Activated CD4-positive, alpha-beta T cell treated with anti-CD3 and anti-CD28 coated beads for 36 hours (primary cell): ENCODE measurements at regions of chr19 and their contacts with region 1.

Region 1: GRCh38 chr19:46661020-46661731 is at the start of gene DACT3:
- DNase-seq: peak; percentile 100
- ATAC-seq: peak; percentile 87
- H3K4me3 Mint-ChIP-seq: peak within 1 kb of the TSS; percentile 66
- H3K27ac Mint-ChIP-seq: peak within 1 kb of the TSS; percentile 62
- H3K4me1 Mint-ChIP-seq: peaks cover 28% of the 10 kb centered on the region
- H3K27me3 Mint-ChIP-seq: peaks cover 12% of the 10 kb centered on the region
- total RNA-seq, gene DACT3: 2.9 to 3.1 TPM

Region 2: DNA sequence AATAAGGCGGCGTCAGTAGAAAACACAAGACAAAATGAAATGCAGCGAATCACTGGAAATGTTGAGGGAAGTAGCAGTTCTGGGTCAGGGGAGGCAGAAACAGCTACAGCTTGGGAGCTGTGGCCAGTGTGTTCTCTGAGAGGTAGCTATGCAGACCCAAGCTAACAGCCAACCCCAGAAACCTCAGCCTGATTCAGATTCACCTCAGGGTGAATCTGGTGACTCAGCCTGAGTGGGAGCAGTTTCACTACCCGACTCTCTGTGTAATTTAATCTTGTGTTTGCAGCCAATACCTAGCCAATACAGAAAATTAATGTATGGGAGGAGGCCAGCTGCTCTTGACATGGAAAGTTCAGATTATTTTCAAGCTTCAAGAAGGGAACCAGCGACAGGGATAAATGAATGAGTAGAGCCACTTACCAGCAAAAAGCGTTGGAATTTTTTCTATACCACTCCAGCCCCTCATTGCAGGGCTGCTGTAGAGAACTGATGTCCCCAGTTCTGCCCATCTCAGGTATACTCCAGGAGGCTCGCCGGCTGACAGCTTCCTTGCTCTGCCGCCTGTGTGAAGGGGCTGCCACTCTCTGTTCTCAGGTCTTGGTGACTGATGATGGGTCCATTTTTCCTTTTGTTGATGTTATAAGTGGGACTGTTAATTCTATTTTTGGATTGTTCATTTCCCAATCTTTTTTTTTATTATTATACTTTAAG is 545.6 kb before region 1 on chr19:
- CTCF ChIA-PET with region 1: no interaction called
- POLR2A ChIA-PET with region 1: no interaction called
- intact Hi-C with region 1: no loop called
- DNase-seq: peak; percentile 84
- ATAC-seq: peak; percentile 99
- H3K4me3 Mint-ChIP-seq: no peak overlapping the region
- H3K27ac Mint-ChIP-seq: no peak overlapping the region
- H3K4me1 Mint-ChIP-seq: peaks cover 13% of the 10 kb centered on the region
- H3K27me3 Mint-ChIP-seq: peaks cover 59% of the 10 kb centered on the region

Region 3: GRCh38 chr19:46373421-46374359 is 287.5 kb before region 1 on chr19:
- CTCF ChIA-PET with region 1: no interaction called
- POLR2A ChIA-PET with region 1: no interaction called
- intact Hi-C with region 1: no loop called
- DNase-seq: no peak
- ATAC-seq: no peak
- H3K4me3 Mint-ChIP-seq: no peak overlapping the region
- H3K27ac Mint-ChIP-seq: no peak overlapping the region
- H3K4me1 Mint-ChIP-seq: peaks cover 27% of the 10 kb centered on the region
- H3K27me3 Mint-ChIP-seq: no peaks in the 10 kb centered on the region

Region 4: GRCh38 chr19:46513461-46514236 is 147.5 kb before region 1 on chr19:
- CTCF ChIA-PET with region 1: interaction called, 10 read pairs
- POLR2A ChIA-PET with region 1: no interaction called
- intact Hi-C with region 1: no loop called
- DNase-seq: peak; percentile 86
- ATAC-seq: peak; percentile 60
- H3K4me3 Mint-ChIP-seq: no peak overlapping the region
- H3K27ac Mint-ChIP-seq: no peak overlapping the region
- H3K4me1 Mint-ChIP-seq: peaks cover 10% of the 10 kb centered on the region
- H3K27me3 Mint-ChIP-seq: peaks cover 23% of the 10 kb centered on the region

Region 5: DNA sequence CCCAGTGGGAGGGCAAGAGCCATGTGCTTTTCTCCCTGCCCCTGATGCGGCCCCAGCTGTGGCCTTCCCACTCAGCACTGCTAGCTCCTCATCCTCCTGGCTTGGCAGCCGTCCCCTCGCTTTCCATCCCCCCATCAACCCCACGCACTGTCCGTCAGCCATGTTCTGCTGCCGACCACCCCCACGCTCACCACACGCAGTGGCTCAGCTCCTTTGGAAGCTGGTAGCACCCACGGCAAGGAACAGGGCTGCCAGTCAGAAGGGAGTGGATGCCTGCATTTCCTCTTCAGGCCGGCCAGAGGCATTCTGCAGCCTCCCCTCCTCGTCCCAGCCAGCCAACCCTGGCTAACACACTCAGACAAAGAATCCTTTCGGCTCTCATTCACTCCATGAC is 53.7 kb before region 1 on chr19:
- CTCF ChIA-PET with region 1: interaction called, 206 read pairs
- POLR2A ChIA-PET with region 1: interaction called, 14 read pairs
- intact Hi-C with region 1: no loop called
- DNase-seq: no peak
- ATAC-seq: no peak
- H3K4me3 Mint-ChIP-seq: no peak overlapping the region
- H3K27ac Mint-ChIP-seq: no peak overlapping the region
- H3K4me1 Mint-ChIP-seq: peaks cover 67% of the 10 kb centered on the region
- H3K27me3 Mint-ChIP-seq: no peaks in the 10 kb centered on the region

Region 6: DNA sequence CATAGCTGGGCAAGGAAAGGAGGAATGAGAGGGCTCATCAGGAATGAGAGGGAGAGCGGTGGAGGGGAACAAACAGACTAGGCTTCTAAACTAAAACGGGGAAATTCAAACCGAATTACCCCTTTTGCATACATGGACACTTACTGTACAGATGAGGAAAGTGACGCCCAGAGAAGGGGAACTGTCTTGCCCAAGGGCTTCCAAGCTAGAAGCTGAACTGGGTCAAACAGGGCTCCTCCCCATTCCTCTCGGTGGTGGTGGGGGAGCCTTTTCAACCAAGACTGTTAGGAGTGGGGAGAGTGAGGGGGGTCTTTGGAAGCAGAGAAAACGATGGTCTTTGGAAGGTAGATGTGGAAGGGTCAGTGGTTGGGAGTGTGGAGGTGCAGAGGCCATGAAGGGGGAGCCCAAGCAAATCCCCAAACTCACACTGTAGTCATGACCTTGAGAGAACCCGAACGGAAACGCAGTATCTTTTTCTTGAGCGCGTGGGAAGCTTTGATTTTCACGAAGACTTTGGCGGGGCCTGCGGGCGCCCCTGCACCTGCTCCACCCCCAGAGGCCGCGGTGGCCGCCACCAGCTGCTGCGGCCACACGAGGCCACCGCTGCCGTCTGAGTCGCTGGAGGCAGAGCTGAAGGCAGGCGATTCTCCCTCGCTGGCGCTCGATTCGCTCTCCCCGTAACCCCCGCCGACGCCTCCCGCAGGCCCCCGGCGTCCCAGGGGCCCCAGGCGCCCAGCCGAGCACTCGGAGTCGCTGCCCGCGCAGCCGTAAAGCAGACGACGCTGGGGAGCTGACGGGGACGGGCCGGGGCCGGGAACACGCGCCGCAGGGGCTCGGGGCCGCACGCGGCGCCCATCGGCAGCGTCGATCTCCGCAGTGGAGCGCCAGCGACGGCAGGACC is 12.9 kb before region 1 on chr19:
- CTCF ChIA-PET with region 1: interaction called, 9 read pairs
- POLR2A ChIA-PET with region 1: no interaction called
- intact Hi-C with region 1: loop called in 1 of 2 experiments (anchors 1 kb)
- DNase-seq: peak; percentile 33
- ATAC-seq: peak; percentile 63
- H3K4me3 Mint-ChIP-seq: peak overlapping the region; percentile 24
- H3K27ac Mint-ChIP-seq: peak overlapping the region; percentile 7
- H3K4me1 Mint-ChIP-seq: peaks cover 12% of the 10 kb centered on the region
- H3K27me3 Mint-ChIP-seq: peaks cover 29% of the 10 kb centered on the region

Region 7: GRCh38 chr19:46728693-46729676 is 67.8 kb after region 1 on chr19:
- CTCF ChIA-PET with region 1: interaction called, 10 read pairs
- POLR2A ChIA-PET with region 1: no interaction called
- intact Hi-C with region 1: no loop called
- DNase-seq: peak; percentile 89
- ATAC-seq: peak; percentile 93
- H3K4me3 Mint-ChIP-seq: no peak overlapping the region
- H3K27ac Mint-ChIP-seq: no peak overlapping the region
- H3K4me1 Mint-ChIP-seq: peaks cover 22% of the 10 kb centered on the region
- H3K27me3 Mint-ChIP-seq: no peaks in the 10 kb centered on the region